ENCODE measurements at regions of chr22 and their contacts with region 1.

Region 1: GRCh38 chr22:20962491-20962945 is 4.5 kb upstream of the AIFM3 start:
- DNase-seq: no peak
- ATAC-seq: no peak
- H3K4me3 ChIP-seq: no peak overlapping the region
- H3K27ac ChIP-seq: no peak overlapping the region
- H3K4me1 ChIP-seq: peaks cover 9% of the 10 kb centered on the region
- H3K27me3 ChIP-seq: no peaks in the 10 kb centered on the region
- CTCF ChIP-seq: no peak

Region 2: DNA sequence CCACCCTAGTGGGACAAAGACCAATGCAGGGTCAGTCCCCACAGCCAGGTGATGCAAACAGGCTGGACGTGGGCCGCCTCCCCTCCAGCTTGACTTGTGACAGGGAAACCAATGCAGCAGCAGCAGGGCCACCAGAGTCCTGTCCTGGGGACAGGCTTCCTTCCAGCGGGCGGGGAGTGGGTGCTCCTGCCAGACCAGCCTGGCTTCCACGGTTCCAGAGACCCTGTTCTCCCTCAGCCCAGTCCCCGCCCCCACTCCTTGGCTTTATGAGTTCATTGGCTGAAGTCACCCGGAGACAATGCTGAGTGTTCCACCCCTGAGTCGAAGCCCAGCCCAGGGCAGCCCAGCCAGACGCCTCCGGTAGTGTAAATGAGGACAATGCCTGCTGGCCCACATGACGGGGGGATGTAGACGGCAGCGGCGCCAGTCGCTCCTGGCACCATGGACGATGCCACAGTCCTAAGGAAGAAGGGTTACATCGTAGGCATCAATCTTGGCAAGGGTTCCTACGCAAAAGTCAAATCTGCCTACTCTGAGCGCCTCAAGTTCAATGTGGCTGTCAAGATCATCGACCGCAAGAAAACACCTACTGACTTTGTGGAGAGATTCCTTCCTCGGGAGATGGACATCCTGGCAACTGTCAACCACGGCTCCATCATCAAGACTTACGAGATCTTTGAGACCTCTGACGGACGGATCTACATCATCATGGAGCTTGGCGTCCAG is 1831.4 kb before region 1 on chr22 and contains the start of gene TSSK2:
- CTCF ChIA-PET with region 1: no interaction called
- POLR2A ChIA-PET with region 1: no interaction called
- in situ Hi-C with region 1: no loop called
- intact Hi-C with region 1: no loop called
- DNase-seq: no peak
- ATAC-seq: no peak
- H3K4me3 ChIP-seq: no peak within 1 kb of the TSS
- H3K27ac ChIP-seq: no peak within 1 kb of the TSS
- H3K4me1 ChIP-seq: no peaks in the 10 kb centered on the region
- H3K27me3 ChIP-seq: no peaks in the 10 kb centered on the region
- CTCF ChIP-seq: no peak
- total RNA-seq, gene TSSK2: not detected

Region 3: GRCh38 chr22:20663137-20663828 is 299.2 kb before region 1 on chr22:
- CTCF ChIA-PET with region 1: no interaction called
- POLR2A ChIA-PET with region 1: no interaction called
- in situ Hi-C with region 1: no loop called
- intact Hi-C with region 1: no loop called
- DNase-seq: no peak
- ATAC-seq: no peak
- H3K4me3 ChIP-seq: no peak overlapping the region
- H3K27ac ChIP-seq: no peak overlapping the region
- H3K4me1 ChIP-seq: no peaks in the 10 kb centered on the region
- H3K27me3 ChIP-seq: peaks cover 8% of the 10 kb centered on the region
- CTCF ChIP-seq: no peak

Region 4: GRCh38 chr22:20741634-20742581 is 220.6 kb before region 1 on chr22:
- CTCF ChIA-PET with region 1: no interaction called
- POLR2A ChIA-PET with region 1: no interaction called
- in situ Hi-C with region 1: no loop called
- intact Hi-C with region 1: no loop called
- DNase-seq: no peak
- ATAC-seq: no peak
- H3K4me3 ChIP-seq: no peak overlapping the region
- H3K27ac ChIP-seq: no peak overlapping the region
- H3K4me1 ChIP-seq: no peaks in the 10 kb centered on the region
- H3K27me3 ChIP-seq: no peaks in the 10 kb centered on the region
- CTCF ChIP-seq: peak; percentile 72

Region 5: GRCh38 chr22:20862540-20862939 is 100.0 kb before region 1 on chr22:
- CTCF ChIA-PET with region 1: interaction called, 10 read pairs
- POLR2A ChIA-PET with region 1: no interaction called
- in situ Hi-C with region 1: no loop called
- intact Hi-C with region 1: no loop called
- DNase-seq: no peak
- ATAC-seq: no peak
- H3K4me3 ChIP-seq: no peak overlapping the region
- H3K27ac ChIP-seq: no peak overlapping the region
- H3K4me1 ChIP-seq: peaks cover 1% of the 10 kb centered on the region; the same call in 1 of the 2 replicates
- H3K27me3 ChIP-seq: no peaks in the 10 kb centered on the region
- CTCF ChIP-seq: no peak